ENCODE measurements at regions of chr9 and their contacts with region 1.

Region 1: GRCh38 chr9:87148331-87149104 is 201.2 kb upstream of the GAS1 start:
- DNase-seq: peak; percentile 49 to 95
- H3K4me3 ChIP-seq: peak overlapping the region; percentile 39 to 57
- H3K27ac ChIP-seq: peak overlapping the region; percentile 95 to 98
- H3K4me1 ChIP-seq: peaks cover 0 to 16% of the 10 kb centered on the region in 2 donors
- H3K27me3 ChIP-seq: no peaks in the 10 kb centered on the region
- CTCF ChIP-seq: peak in 1 of 3 experiments; percentile 40

Region 2: GRCh38 chr9:87119328-87119881 is 29.1 kb before region 1 on chr9:
- intact Hi-C with region 1: loop called (anchors 2 kb)
- DNase-seq: peak in 1 of 2 donors; percentile 76
- H3K4me3 ChIP-seq: no peak overlapping the region
- H3K27ac ChIP-seq: peak overlapping the region; percentile 2 to 53
- H3K4me1 ChIP-seq: peaks cover 3 to 30% of the 10 kb centered on the region in 2 donors
- H3K27me3 ChIP-seq: no peaks in the 10 kb centered on the region
- CTCF ChIP-seq: no peak

Region 3: GRCh38 chr9:87167163-87167562 is 18.6 kb after region 1 on chr9:
- intact Hi-C with region 1: no loop called
- DNase-seq: no peak
- H3K4me3 ChIP-seq: no peak overlapping the region
- H3K27ac ChIP-seq: no peak overlapping the region
- H3K4me1 ChIP-seq: no peaks in the 10 kb centered on the region
- H3K27me3 ChIP-seq: no peaks in the 10 kb centered on the region
- CTCF ChIP-seq: no peak

Region 4: DNA sequence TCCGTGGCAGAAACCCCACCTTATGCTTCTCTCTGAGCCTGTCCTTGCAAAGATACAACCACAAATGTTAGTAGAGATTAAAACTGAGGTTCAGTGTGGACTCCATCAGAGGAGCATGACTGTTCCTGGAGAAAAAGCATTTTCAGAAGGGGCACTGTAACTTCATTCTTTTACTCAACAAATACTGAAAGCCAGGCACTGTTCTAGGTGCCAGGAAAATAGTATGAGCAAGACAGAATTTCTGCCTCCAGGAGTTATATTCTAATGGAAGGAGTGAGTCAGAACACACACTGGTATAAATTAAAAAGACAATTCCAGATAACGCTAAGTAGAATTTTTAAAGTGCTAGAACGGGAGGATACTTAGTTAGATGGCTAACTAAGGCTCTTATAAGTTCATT is 50.2 kb after region 1 on chr9:
- intact Hi-C with region 1: loop called (anchors 2 kb)
- DNase-seq: no peak
- H3K4me3 ChIP-seq: no peak overlapping the region
- H3K27ac ChIP-seq: peak overlapping the region in 1 of 2 donors; percentile 68
- H3K4me1 ChIP-seq: peaks cover 0 to 3% of the 10 kb centered on the region in 2 donors
- H3K27me3 ChIP-seq: no peaks in the 10 kb centered on the region
- CTCF ChIP-seq: no peak

Region 5: GRCh38 chr9:87238545-87238944 is 90.0 kb after region 1 on chr9:
- intact Hi-C with region 1: loop called (anchors 5 kb)
- DNase-seq: peak in 1 of 2 donors; percentile 67
- H3K4me3 ChIP-seq: peak overlapping the region in 1 of 2 donors; percentile 32
- H3K27ac ChIP-seq: peak overlapping the region; percentile 21 to 38
- H3K4me1 ChIP-seq: no peaks in the 10 kb centered on the region
- H3K27me3 ChIP-seq: no peaks in the 10 kb centered on the region
- CTCF ChIP-seq: no peak

Region 6: GRCh38 chr9:87701931-87702421 is 553.5 kb after region 1 on chr9:
- intact Hi-C with region 1: no loop called
- DNase-seq: no peak
- H3K4me3 ChIP-seq: no peak overlapping the region
- H3K27ac ChIP-seq: no peak overlapping the region
- H3K4me1 ChIP-seq: no peaks in the 10 kb centered on the region
- H3K27me3 ChIP-seq: no peaks in the 10 kb centered on the region
- CTCF ChIP-seq: no peak

Measured in ascending aorta (tissue), 2 donors.